Naive thymus-derived CD4-positive, alpha-beta T cell (primary cell): ENCODE measurements at regions of chr6 and their contacts with region 1.

Region 1: DNA sequence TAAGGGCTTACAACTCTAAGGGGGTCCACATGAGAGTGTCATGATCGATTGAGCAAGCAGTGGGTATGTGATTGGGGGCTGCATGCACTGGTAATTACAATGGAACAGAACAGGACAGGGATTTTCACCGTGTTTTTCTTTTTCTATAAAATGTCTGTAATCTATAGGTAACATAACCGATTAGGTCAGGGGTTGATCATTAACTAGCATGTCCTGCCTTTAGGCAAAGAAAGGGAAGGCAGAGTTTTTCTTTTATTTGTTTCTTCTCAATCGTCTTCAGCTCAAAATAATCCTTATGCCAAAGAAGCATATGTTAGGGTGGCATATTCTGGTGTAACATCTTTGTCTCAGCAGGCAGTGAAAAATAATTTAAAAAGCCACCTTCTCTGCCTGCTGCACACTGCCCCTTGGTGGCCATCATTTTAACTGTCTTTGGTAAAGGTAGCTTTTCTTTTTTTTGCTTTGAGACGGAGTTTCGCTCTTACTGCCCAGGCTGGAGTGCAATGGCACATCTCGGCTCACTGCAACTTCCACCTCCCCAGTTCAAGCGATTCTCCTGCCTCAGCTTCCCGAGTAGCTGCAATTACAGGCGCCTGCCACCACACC is 9.7 kb upstream of the CEP43 start:
- DNase-seq: peak; percentile 22 to 81 (median 46)
- ATAC-seq: peak; percentile 90
- H3K4me3 ChIP-seq: no peak overlapping the region
- H3K4me3 Mint-ChIP-seq: peak overlapping the region in 1 of 10 donors; percentile 62
- H3K27ac ChIP-seq: no peak overlapping the region
- H3K27ac Mint-ChIP-seq: peak overlapping the region in 4 of 9 donors; percentile 11 to 93 (median 38)
- H3K4me1 ChIP-seq: peaks cover 0 to 15% of the 10 kb centered on the region in 2 donors
- H3K4me1 Mint-ChIP-seq: peaks cover 11 to 37% (median 28%) of the 10 kb centered on the region in 7 donors
- H3K27me3 ChIP-seq: no peaks in the 10 kb centered on the region
- H3K27me3 Mint-ChIP-seq: no peaks in the 10 kb centered on the region

Region 2: DNA sequence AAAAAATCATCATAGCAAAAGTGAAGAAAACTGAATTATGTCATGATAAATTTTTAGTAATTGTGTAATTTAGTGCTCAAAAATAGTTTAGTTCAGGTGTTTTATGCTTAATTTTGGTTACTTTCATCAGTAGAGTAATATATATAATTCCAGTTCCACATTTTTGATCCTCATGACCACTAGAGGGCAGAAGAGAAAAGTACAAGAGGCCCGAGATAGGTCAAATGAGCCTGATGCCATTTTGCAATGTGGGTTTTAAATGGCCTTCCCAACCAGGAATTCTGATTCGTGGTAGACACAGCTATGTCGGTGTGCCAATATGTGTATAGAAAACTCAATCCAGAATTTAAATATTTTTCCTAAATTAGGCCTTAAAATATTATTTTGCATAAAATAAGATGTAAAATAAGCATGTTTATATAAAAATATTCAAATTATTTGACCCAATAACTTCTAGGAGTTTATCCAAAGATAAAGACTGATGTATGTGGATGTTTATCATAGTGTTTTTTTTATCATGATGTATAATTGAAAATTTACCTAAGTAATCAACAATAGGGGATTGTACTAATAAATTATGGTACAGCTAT is 202.7 kb before region 1 on chr6:
- CTCF ChIA-PET with region 1: interaction called, 99 read pairs
- POLR2A ChIA-PET with region 1: interaction called, 4 read pairs
- intact Hi-C with region 1: loop called (anchors 1 kb)
- DNase-seq: peak in 7 of 9 donors; percentile 42 to 70 (median 59)
- ATAC-seq: peak; percentile 78
- H3K4me3 ChIP-seq: no peak overlapping the region
- H3K4me3 Mint-ChIP-seq: no peak overlapping the region
- H3K27ac ChIP-seq: no peak overlapping the region
- H3K27ac Mint-ChIP-seq: no peak overlapping the region
- H3K4me1 ChIP-seq: no peaks in the 10 kb centered on the region
- H3K4me1 Mint-ChIP-seq: no peaks in the 10 kb centered on the region
- H3K27me3 ChIP-seq: no peaks in the 10 kb centered on the region
- H3K27me3 Mint-ChIP-seq: peaks cover 0 to 13% (median 0%) of the 10 kb centered on the region in 5 donors

Region 3: DNA sequence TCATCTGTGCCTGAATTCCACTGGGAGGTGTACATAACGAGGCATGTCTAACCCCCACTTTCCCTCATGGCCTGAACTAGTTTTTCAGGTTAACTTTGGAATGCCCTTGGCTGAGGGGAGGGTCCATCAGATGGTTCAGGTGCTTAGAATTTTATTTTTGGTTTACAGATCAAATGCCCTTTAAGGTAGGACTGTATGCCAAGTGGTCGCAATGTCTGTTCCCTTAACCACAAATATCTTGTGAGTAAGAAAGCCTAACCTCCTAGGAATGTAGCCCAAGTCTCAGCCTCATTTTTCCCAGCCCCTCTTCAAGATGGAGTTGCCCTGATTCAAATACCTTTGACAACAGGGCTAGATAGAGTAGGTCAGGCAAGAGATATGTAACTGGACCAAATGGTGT is 111.6 kb before region 1 on chr6:
- CTCF ChIA-PET with region 1: interaction called, 4 read pairs
- POLR2A ChIA-PET with region 1: no interaction called
- intact Hi-C with region 1: loop called in 1 of 2 experiments (anchors 5 kb)
- DNase-seq: no peak
- ATAC-seq: no peak
- H3K4me3 ChIP-seq: no peak overlapping the region
- H3K4me3 Mint-ChIP-seq: no peak overlapping the region
- H3K27ac ChIP-seq: no peak overlapping the region
- H3K27ac Mint-ChIP-seq: no peak overlapping the region
- H3K4me1 ChIP-seq: no peaks in the 10 kb centered on the region
- H3K4me1 Mint-ChIP-seq: peaks cover 0 to 4% (median 0%) of the 10 kb centered on the region in 7 donors
- H3K27me3 ChIP-seq: no peaks in the 10 kb centered on the region
- H3K27me3 Mint-ChIP-seq: peaks cover 0 to 12% (median 0%) of the 10 kb centered on the region in 5 donors

Region 4: DNA sequence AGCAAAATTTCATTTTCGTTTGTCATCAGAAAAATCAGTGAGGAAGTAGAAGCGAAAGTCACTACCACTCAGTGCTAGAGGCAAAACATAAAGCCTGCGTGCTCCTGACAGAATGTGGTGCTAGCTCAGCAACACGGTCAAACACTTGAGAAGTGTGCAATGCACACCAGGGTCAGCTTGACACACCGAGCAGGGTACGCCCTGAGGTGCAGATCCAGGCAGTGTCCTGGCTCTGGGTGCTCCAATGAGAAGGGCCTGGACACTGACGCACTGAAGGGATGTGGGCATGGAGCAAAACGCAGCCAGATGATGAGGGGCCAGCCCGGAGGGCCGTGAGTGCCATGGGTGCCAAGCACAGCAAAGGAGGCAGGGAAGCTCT is 39.1 kb before region 1 on chr6:
- CTCF ChIA-PET with region 1: interaction called, 47 read pairs
- POLR2A ChIA-PET with region 1: interaction called, 42 read pairs
- intact Hi-C with region 1: loop called (anchors 1 kb)
- DNase-seq: peak in 1 of 9 donors; percentile 31
- ATAC-seq: peak; percentile 12
- H3K4me3 ChIP-seq: peak overlapping the region; percentile 45
- H3K4me3 Mint-ChIP-seq: peak overlapping the region; percentile 51 to 95 (median 84)
- H3K27ac ChIP-seq: peak overlapping the region; percentile 92
- H3K27ac Mint-ChIP-seq: peak overlapping the region; percentile 91 to 99 (median 98)
- H3K4me1 ChIP-seq: peaks cover 28 to 63% of the 10 kb centered on the region in 2 donors
- H3K4me1 Mint-ChIP-seq: peaks cover 42 to 67% (median 64%) of the 10 kb centered on the region in 7 donors
- H3K27me3 ChIP-seq: no peaks in the 10 kb centered on the region
- H3K27me3 Mint-ChIP-seq: no peaks in the 10 kb centered on the region

Region 5: DNA sequence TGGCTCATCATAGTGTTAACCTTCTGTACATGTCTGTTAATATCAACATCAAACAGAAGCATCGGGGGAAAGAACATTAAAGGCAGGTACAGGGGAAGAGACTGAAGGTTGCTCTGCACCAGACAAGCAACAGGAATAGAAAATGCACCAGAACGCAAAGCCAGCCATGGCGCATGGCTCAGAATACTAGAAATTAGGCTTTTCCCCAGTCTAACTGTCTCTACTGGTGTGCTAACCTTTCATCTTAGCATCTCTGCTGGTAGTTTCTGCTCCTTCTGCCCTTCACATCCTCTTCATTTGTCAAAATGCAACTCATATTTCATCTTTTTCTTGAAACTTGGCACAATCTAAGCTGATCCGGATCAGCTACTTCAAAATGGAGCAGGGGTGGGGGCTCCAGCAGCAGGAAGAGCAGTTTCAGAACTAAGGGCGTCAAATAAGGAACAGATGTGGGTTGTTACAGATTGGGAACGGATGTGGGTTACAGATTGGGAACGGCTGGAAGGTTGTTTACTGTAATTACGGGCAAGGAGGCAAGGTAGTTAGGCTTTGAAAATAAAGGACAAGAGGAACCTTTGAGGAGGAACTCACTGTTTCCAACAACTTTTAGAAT is 20.0 kb before region 1 on chr6:
- CTCF ChIA-PET with region 1: interaction called, 6 read pairs
- POLR2A ChIA-PET with region 1: interaction called, 11 read pairs
- intact Hi-C with region 1: loop called in 1 of 2 experiments (anchors 2 kb)
- DNase-seq: peak in 4 of 9 donors; percentile 31 to 70 (median 54)
- ATAC-seq: peak; percentile 68
- H3K4me3 ChIP-seq: no peak overlapping the region
- H3K4me3 Mint-ChIP-seq: peak overlapping the region; percentile 55 to 87 (median 74)
- H3K27ac ChIP-seq: peak overlapping the region; percentile 62
- H3K27ac Mint-ChIP-seq: peak overlapping the region; percentile 71 to 94 (median 87)
- H3K4me1 ChIP-seq: peaks cover 6 to 27% of the 10 kb centered on the region in 2 donors
- H3K4me1 Mint-ChIP-seq: peaks cover 16 to 74% (median 20%) of the 10 kb centered on the region in 7 donors
- H3K27me3 ChIP-seq: no peaks in the 10 kb centered on the region
- H3K27me3 Mint-ChIP-seq: no peaks in the 10 kb centered on the region

Region 6: DNA sequence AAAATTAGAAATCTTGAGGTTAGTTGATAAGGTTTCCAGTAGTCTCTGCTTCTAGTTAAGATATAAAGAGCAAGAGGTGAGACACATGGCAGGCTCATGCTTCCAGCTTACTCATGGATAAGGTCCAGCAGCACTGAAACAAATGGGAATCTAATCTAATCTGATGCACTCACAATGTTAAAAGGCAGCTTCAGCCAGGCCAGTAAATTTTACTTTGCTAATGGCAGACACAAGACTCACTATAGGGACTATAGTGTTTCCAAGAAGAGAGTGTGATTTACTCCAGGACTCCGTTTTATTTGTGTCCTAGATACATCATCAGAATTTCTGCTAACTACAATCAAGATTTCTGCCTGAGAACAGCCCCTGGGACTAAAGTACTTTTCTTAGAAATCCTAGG is 1776.2 kb after region 1 on chr6:
- CTCF ChIA-PET with region 1: no interaction called
- POLR2A ChIA-PET with region 1: no interaction called
- intact Hi-C with region 1: no loop called
- DNase-seq: no peak
- ATAC-seq: no peak
- H3K4me3 ChIP-seq: no peak overlapping the region
- H3K4me3 Mint-ChIP-seq: no peak overlapping the region
- H3K27ac ChIP-seq: no peak overlapping the region
- H3K27ac Mint-ChIP-seq: no peak overlapping the region
- H3K4me1 ChIP-seq: no peaks in the 10 kb centered on the region
- H3K4me1 Mint-ChIP-seq: no peaks in the 10 kb centered on the region
- H3K27me3 ChIP-seq: no peaks in the 10 kb centered on the region
- H3K27me3 Mint-ChIP-seq: peaks cover 0 to 13% (median 3%) of the 10 kb centered on the region in 5 donors